MCF 10A (cell line): ENCODE measurements at regions of chr3 and their contacts with region 1.

Region 1: DNA sequence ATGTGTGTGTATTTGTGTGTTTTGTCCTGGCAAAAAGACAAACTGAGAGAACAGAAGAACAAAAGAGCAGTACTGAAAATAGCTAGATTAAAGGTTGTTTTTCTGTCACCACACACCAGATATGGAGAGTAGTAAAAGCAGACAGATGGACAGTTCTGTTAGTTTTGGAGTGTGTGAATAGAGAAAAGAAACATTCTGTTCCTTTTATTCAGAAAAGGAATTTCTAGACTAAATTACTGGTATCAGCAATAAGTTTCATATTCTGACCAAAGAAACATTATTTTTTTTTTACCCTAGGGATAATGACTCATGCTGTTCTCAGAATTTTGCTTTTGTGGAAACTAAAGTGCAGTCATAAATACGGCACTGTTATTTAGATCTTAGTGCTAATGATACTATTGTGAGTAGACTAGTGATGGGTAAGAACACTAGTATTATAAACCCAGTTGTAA is 32.9 kb downstream of the PIK3CA start:
- DNase-seq: peak; percentile 31
- H3K4me3 Mint-ChIP-seq: no peak overlapping the region
- H3K27ac Mint-ChIP-seq: no peak overlapping the region
- H3K4me1 Mint-ChIP-seq: peaks cover 24% of the 10 kb centered on the region
- H3K27me3 Mint-ChIP-seq: no peaks in the 10 kb centered on the region
- CTCF ChIP-seq: no peak

Region 2: GRCh38 chr3:178966299-178967176 is 214.5 kb before region 1 on chr3:
- CTCF ChIA-PET with region 1: no interaction called
- POLR2A ChIA-PET with region 1: no interaction called
- intact Hi-C with region 1: no loop called
- DNase-seq: peak; percentile 25
- H3K4me3 Mint-ChIP-seq: no peak overlapping the region
- H3K27ac Mint-ChIP-seq: no peak overlapping the region
- H3K4me1 Mint-ChIP-seq: no peaks in the 10 kb centered on the region
- H3K27me3 Mint-ChIP-seq: no peaks in the 10 kb centered on the region
- CTCF ChIP-seq: peak; percentile 63

Region 3: GRCh38 chr3:179158336-179159039 is 22.6 kb before region 1 on chr3:
- CTCF ChIA-PET with region 1: interaction called, 4 read pairs
- POLR2A ChIA-PET with region 1: interaction called, 34 read pairs
- intact Hi-C with region 1: no loop called
- DNase-seq: no peak
- H3K4me3 Mint-ChIP-seq: no peak overlapping the region
- H3K27ac Mint-ChIP-seq: no peak overlapping the region
- H3K4me1 Mint-ChIP-seq: peaks cover 13% of the 10 kb centered on the region
- H3K27me3 Mint-ChIP-seq: no peaks in the 10 kb centered on the region
- CTCF ChIP-seq: no peak

Region 4: DNA sequence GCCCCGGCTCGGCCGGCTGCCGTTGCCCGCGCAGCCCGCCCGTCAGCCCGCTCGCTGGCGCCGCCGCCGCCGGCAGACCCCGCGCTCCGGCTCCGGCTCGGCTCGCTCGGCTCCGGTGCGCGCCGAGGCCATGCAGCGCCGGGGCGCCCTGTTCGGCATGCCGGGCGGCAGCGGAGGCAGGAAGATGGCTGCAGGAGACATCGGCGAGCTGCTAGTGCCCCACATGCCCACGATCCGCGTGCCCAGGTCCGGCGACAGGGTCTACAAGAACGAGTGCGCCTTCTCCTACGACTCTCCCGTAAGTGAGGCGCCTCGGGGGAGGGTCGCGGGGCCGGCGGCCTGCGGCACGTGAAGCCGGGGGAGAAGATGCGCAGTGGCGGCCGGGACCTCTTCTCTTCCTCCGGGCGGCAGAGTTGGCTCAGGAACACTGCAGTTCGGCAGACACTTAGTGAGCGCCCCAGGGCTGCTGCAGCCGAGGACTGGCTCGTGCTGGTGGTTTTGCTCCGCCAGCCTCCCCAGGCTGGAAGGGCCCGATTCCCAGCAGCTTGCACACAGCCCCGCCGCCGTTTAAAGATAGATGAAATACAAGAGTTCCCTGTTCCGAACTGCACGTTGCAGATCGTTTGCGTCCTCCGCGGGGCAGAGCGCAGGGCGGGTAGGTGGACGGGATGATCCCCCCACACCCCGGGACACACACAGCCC is 472.2 kb after region 1 on chr3:
- CTCF ChIA-PET with region 1: no interaction called
- POLR2A ChIA-PET with region 1: no interaction called
- intact Hi-C with region 1: no loop called
- DNase-seq: peak; percentile 75
- H3K4me3 Mint-ChIP-seq: peak overlapping the region; percentile 85
- H3K27ac Mint-ChIP-seq: peak overlapping the region; percentile 82
- H3K4me1 Mint-ChIP-seq: peaks cover 8% of the 10 kb centered on the region
- H3K27me3 Mint-ChIP-seq: no peaks in the 10 kb centered on the region
- CTCF ChIP-seq: no peak